ENCODE measurements at regions of chr1 and their contacts with region 1.

Region 1: DNA sequence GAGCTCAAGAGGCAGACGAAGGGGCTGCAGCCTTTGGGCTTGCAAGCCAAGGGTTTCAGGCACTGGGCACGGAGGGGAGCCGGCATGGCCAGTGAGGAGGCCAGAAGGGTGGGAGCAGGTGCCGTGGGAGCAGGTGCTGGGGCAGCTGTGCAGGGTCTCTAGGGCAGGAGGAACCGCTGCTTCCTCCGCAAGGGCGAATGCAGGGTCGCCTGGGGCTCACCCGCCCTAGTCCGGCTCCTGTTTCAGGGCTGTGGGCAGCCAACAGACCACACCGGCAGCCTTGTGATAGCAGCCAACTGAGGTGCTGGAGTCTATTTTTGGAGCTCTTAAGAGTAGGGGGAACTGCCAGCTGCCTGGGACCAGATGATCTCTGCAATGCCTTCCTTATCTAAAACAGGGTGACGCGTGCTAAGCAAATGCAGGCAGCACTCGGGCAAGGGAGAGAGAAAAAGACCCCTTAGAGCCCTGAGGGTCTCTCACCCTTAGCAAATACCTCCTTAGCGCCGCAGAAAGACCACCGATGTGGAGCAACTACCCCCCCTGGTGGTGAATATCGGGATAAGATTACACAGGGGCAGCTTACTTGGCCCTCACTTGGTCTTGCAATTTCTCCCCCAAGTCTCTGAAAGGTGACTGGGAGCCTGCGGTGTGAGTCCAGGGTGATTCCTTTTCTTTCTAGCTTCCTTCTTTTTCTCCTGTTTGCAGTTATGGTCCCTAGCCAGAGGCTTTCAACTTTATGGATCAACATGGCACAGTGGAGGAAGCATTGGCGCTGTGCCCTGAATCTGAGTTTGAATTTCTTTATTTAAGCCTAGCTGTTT is 20.7 kb upstream of the MAPKAPK2 start:
- DNase-seq: peak; percentile 86
- H3K4me3 Mint-ChIP-seq: no peak overlapping the region
- H3K27ac Mint-ChIP-seq: no peak overlapping the region
- H3K4me1 Mint-ChIP-seq: peaks cover 12% of the 10 kb centered on the region
- H3K27me3 Mint-ChIP-seq: peaks cover 26% of the 10 kb centered on the region
- CTCF ChIP-seq: peak; percentile 99

Region 2: GRCh38 chr1:206484901-206485300 is 179.1 kb before region 1 on chr1:
- CTCF ChIA-PET with region 1: interaction called, 41 read pairs
- POLR2A ChIA-PET with region 1: interaction called, 3 read pairs
- intact Hi-C with region 1: loop called (anchors 2 kb)
- DNase-seq: no peak
- H3K4me3 Mint-ChIP-seq: no peak overlapping the region
- H3K27ac Mint-ChIP-seq: no peak overlapping the region
- H3K4me1 Mint-ChIP-seq: peaks cover 23% of the 10 kb centered on the region
- H3K27me3 Mint-ChIP-seq: no peaks in the 10 kb centered on the region
- CTCF ChIP-seq: no peak

Region 3: DNA sequence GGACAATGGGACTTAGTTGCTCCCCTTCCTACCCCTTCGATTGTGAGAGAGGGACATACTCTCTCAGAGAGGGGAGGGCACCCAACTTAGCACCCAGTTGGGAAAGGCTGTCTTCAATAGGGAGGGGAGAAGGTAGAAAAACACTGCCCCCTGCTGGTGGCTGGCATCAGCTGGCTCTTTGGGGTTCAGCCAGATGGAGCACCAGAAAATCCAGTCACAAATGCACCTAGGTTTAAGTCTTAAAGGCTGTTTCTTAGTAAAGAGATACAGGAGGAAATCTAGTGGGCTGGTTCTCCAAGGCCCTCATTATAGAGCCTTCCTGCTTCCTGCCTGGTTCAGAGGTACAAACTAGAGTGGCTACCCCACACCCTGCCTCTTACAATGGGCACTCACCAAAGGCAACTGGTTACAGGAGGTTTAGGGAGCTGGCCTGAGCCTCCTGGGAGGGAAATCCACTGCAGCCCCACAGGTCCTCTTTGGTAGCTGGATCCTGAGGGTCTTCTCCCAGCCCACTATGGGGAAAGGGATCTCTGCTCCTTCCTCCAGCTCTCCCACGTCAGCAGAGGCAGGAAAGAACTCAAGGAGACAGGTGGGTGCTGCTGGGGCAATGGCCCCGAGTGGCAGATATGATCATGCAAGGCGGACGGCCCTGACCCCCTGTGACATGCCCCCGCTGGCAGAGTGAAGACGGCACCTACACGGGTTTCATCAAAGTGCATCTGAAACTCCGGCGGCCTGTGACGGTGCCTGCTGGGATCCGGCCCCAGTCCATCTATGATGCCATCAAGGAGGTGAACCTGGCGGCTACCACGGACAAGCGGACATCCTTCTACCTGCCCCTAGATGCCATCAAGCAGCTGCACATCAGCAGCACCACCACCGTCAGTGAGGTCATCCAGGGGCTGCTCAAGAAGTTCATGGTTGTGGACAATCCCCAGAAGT is 80.1 kb before region 1 on chr1:
- CTCF ChIA-PET with region 1: interaction called, 14 read pairs
- POLR2A ChIA-PET with region 1: no interaction called
- intact Hi-C with region 1: no loop called
- DNase-seq: peak; percentile 90
- H3K4me3 Mint-ChIP-seq: no peak overlapping the region
- H3K27ac Mint-ChIP-seq: no peak overlapping the region
- H3K4me1 Mint-ChIP-seq: peaks cover 20% of the 10 kb centered on the region
- H3K27me3 Mint-ChIP-seq: no peaks in the 10 kb centered on the region
- CTCF ChIP-seq: peak; percentile 99

Region 4: GRCh38 chr1:206635080-206635977 is 28.7 kb before region 1 on chr1 and contains the start of gene DYRK3:
- CTCF ChIA-PET with region 1: interaction called, 1,191 read pairs
- POLR2A ChIA-PET with region 1: interaction called, 193 read pairs
- intact Hi-C with region 1: loop called (anchors 1 kb)
- DNase-seq: peak; percentile 99
- H3K4me3 Mint-ChIP-seq: peak within 1 kb of the TSS; percentile 89
- H3K27ac Mint-ChIP-seq: peak within 1 kb of the TSS; percentile 82
- H3K4me1 Mint-ChIP-seq: peaks cover 38% of the 10 kb centered on the region
- H3K27me3 Mint-ChIP-seq: no peaks in the 10 kb centered on the region
- CTCF ChIP-seq: no peak
- total RNA-seq, gene DYRK3: 45.4 and 58.5 TPM in 2 replicates

Region 5: GRCh38 chr1:206700445-206701036 is 36.5 kb after region 1 on chr1:
- CTCF ChIA-PET with region 1: interaction called, 19 read pairs
- POLR2A ChIA-PET with region 1: interaction called, 3 read pairs
- intact Hi-C with region 1: no loop called
- DNase-seq: peak; percentile 81
- H3K4me3 Mint-ChIP-seq: no peak overlapping the region
- H3K27ac Mint-ChIP-seq: peak overlapping the region; percentile 80
- H3K4me1 Mint-ChIP-seq: peaks cover 57% of the 10 kb centered on the region
- H3K27me3 Mint-ChIP-seq: no peaks in the 10 kb centered on the region
- CTCF ChIP-seq: no peak

Region 6: DNA sequence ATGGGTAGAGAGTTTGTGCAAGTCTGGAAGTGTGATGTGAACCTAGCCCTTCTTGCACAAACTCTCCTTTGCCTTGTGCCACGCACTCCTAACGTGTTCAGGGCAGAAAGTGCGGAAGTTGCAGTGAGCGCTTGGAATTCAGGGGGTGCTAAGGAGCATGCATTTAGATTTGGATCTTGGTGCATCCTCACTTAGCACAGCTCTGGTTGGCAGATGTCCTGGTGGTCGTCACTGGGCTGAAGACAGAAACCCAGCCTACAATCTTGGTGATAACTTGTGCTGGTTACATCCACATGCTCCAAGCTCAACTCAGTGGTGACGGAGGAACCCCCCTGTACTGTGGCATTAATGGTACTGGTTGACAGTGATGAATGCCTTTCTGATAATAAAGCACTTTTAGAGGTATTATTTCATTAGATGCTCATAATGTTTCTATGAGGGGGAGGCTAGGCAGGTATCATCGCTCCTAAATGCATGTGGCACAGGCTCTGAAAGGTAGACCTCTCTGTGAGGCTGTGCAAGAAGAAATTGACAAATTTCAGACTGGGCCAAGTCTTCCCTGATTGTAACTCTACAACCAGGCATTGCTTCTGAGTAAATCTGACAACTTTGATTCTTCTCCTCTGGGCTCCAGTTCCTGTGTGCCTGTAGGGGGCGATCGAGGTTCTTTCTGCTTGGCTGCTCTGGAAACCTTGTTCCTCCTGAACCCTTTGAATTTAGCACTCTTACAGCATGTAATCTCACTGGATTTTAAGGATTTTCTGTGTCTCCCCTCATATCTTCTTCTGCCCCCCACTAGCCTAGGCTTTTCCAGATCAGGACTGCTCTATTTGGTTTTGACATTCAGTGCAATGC is 61.3 kb after region 1 on chr1:
- CTCF ChIA-PET with region 1: interaction called, 31 read pairs
- POLR2A ChIA-PET with region 1: interaction called, 3 read pairs
- intact Hi-C with region 1: no loop called
- DNase-seq: peak; percentile 78
- H3K4me3 Mint-ChIP-seq: no peak overlapping the region
- H3K27ac Mint-ChIP-seq: no peak overlapping the region
- H3K4me1 Mint-ChIP-seq: peaks cover 57% of the 10 kb centered on the region
- H3K27me3 Mint-ChIP-seq: no peaks in the 10 kb centered on the region
- CTCF ChIP-seq: peak; percentile 54